Caco-2 (cell line): ENCODE measurements at regions of chr10 and their contacts with region 1.

Region 1: DNA sequence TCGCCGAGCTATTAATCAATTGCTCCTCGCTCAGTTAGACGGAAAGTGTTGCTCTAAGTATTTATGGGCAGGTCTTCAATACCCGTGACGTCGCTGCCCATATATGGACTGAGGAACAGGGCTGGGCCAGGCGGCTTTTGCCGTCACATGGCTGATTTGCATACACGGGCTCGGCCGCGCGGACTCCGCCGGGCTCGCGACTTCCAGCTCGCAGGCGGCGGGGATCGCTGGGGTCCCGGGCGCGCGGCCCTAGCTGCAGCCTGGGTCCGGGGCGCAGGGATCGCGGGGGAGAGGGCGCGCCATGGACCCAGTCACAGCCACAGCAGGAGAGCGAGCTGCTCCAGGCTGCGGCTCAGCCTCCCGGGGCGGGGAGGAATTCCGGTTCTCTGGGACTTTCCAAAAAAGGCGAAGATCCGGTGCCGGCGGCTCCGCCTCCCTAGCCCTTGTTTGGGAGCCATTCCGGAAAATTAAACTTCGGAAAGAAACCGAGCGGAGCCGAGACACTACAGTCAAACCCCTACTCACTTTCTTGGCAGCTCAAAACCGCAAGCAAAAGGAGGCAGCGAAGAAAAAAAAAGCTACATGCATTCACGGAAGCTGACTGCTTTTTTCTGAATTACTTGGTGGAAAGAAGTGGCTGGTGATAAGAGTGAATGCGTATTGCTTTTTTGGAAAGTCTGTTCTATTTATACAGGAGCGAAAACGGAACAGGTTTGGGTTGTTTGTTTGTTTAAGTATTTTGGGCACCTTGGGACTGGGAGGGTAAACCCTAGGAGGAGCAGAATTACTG is at the start of gene EGR2:
- DNase-seq: peak; percentile 96 to 97
- H3K4me3 ChIP-seq: peak within 1 kb of the TSS; percentile 55
- H3K4me3 Mint-ChIP-seq: peak within 1 kb of the TSS; percentile 87
- H3K27ac Mint-ChIP-seq: peak within 1 kb of the TSS; percentile 74
- H3K4me1 ChIP-seq: peaks cover 17% of the 10 kb centered on the region
- H3K4me1 Mint-ChIP-seq: peaks cover 20% of the 10 kb centered on the region
- H3K27me3 ChIP-seq: peaks cover 16% of the 10 kb centered on the region
- H3K27me3 Mint-ChIP-seq: peaks cover 40% of the 10 kb centered on the region
- CTCF ChIP-seq: no peak
- total RNA-seq, gene EGR2: 0.30 and 0.61 TPM in 2 replicates

Region 2: DNA sequence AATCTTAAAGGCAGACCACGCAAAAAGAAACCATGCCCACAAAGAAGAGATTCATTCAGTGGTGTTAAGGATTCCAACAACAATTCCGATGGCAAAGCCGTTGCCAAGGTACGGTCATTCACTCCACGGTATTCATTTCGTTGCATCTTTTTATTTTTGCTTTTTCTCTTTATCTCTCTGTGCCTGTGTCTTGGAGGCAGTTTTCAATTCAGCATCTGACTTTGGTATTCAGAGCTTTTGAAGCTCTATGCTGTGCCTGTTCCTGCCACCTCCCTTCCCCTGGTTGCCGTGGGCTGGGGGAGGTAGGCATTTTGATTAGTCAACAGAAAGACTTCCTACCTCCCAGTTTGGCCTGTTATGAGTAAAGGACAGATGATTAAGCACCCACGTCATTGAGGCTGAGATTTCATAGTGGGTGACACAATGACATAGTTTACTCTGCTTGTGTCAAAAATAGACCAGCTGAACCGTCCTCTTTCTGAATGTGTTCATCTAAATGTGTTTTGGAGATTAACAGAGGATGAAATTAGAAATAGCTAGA is 765.6 kb before region 1 on chr10:
- CTCF ChIA-PET with region 1: no interaction called
- POLR2A ChIA-PET with region 1: no interaction called
- intact Hi-C with region 1: loop called (anchors 10 kb)
- DNase-seq: peak in 1 of 2 experiments; percentile 57
- H3K4me3 ChIP-seq: peak overlapping the region; percentile 36
- H3K4me3 Mint-ChIP-seq: peak overlapping the region; percentile 93
- H3K27ac Mint-ChIP-seq: peak overlapping the region; percentile 79
- H3K4me1 ChIP-seq: peaks cover 74% of the 10 kb centered on the region
- H3K4me1 Mint-ChIP-seq: peaks cover 82% of the 10 kb centered on the region
- H3K27me3 ChIP-seq: no peaks in the 10 kb centered on the region
- H3K27me3 Mint-ChIP-seq: no peaks in the 10 kb centered on the region
- CTCF ChIP-seq: no peak

Region 3: DNA sequence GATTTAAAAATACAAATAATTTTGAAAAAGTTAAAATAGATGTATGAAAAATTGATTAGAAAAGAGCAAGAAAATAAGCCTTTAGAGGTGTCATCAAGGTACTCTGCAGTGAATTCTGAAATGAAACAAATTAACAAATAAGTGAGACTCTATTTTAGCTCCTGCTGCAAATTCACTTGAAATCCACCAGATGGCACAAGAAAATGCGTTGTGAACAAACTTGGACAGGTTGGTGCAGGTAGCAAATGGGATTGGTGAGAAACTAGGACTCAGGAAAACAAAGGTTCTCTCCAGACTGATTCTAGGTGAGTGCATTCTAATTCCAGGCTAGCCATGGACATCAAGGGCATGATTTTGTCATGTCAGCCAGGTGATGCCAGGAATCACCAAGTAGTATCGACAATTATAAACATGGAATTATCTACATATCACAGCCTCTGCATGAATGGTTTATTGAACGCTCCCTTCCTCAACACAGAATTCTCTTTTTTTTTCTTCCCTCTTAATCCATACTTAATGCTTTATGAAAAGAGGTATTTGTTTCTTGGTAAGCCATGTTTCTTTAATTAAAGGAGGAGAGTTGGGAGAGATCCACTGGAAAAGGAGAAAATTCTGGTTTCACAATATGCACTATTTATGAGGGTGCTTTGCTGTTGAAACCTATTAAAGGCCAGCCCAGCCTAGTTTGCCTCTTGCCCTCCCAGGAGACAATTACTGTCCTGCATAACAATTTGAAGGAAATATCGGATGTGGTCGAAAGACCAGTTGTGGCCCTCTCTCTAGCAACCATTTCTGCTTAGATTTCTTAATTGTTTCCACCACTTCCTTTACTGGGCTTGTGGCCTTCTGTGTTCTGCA is 324.3 kb before region 1 on chr10:
- CTCF ChIA-PET with region 1: interaction called, 12 read pairs
- POLR2A ChIA-PET with region 1: no interaction called
- intact Hi-C with region 1: no loop called
- DNase-seq: peak in 1 of 2 experiments; percentile 36
- H3K4me3 ChIP-seq: no peak overlapping the region
- H3K4me3 Mint-ChIP-seq: no peak overlapping the region
- H3K27ac Mint-ChIP-seq: no peak overlapping the region
- H3K4me1 ChIP-seq: no peaks in the 10 kb centered on the region
- H3K4me1 Mint-ChIP-seq: no peaks in the 10 kb centered on the region
- H3K27me3 ChIP-seq: 0 out of 2 replicates have a peak, but pooled peaks cover 1% of the 10 kb centered on the region
- H3K27me3 Mint-ChIP-seq: peaks cover 19% of the 10 kb centered on the region
- CTCF ChIP-seq: peak; percentile 79 to 83

Region 4: DNA sequence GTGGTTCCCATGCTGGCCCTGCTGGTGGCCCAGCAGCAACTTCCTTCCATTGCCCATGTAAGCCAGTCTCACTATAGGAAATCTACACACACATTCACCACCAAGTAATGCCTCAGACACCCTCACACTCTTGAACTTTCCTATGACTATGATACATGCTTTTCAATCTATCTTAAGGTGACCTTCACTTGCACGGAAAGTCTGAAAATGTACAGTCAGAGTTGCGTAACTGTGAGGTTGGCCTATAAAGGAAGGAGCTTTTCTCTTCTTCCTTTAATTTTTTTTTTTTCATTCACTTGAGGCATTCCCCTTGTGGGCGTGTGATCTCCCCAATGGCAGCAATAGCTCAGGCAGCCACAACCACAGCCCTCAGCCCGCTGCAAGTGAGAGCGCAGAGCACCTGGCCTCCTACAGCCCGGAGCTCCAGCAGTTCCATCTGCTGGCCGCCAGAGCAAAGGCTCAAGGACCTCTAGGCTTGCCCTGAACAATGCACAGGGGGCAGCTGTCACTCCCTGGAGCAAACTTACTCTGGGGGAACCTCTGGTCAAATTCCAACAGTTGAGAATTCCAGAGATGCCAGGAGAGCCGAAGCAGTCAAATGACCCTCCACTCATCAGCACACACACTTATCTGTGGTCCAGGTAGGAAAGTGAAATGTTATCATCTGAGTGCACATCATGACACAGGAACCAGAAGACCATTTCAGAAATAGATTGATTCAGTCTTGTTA is 135.2 kb before region 1 on chr10:
- CTCF ChIA-PET with region 1: interaction called, 6 read pairs
- POLR2A ChIA-PET with region 1: no interaction called
- intact Hi-C with region 1: loop called (anchors 1 kb)
- DNase-seq: peak; percentile 80 to 91
- H3K4me3 ChIP-seq: no peak overlapping the region
- H3K4me3 Mint-ChIP-seq: no peak overlapping the region
- H3K27ac Mint-ChIP-seq: no peak overlapping the region
- H3K4me1 ChIP-seq: peaks cover 13% of the 10 kb centered on the region
- H3K4me1 Mint-ChIP-seq: peaks cover 8% of the 10 kb centered on the region
- H3K27me3 ChIP-seq: no peaks in the 10 kb centered on the region
- H3K27me3 Mint-ChIP-seq: peaks cover 2% of the 10 kb centered on the region
- CTCF ChIP-seq: peak; percentile 32 to 65

Region 5: GRCh38 chr10:62804356-62805230 is 11.9 kb before region 1 on chr10 and contains the start of gene ADO:
- CTCF ChIA-PET with region 1: interaction called, 13 read pairs
- POLR2A ChIA-PET with region 1: interaction called, 26 read pairs
- intact Hi-C with region 1: loop called (anchors 1 kb)
- DNase-seq: peak; percentile 88 to 93
- H3K4me3 ChIP-seq: peak within 1 kb of the TSS; percentile 81
- H3K4me3 Mint-ChIP-seq: peak within 1 kb of the TSS; percentile 90
- H3K27ac Mint-ChIP-seq: peak within 1 kb of the TSS; percentile 96
- H3K4me1 ChIP-seq: peaks cover 22% of the 10 kb centered on the region
- H3K4me1 Mint-ChIP-seq: peaks cover 26% of the 10 kb centered on the region
- H3K27me3 ChIP-seq: no peaks in the 10 kb centered on the region
- H3K27me3 Mint-ChIP-seq: no peaks in the 10 kb centered on the region
- CTCF ChIP-seq: peak in 1 of 2 experiments; percentile 50
- total RNA-seq, gene ADO: 31.3 and 34.1 TPM in 2 replicates

Region 6: GRCh38 chr10:63157845-63158624 is 341.5 kb after region 1 on chr10:
- CTCF ChIA-PET with region 1: interaction called, 8 read pairs
- POLR2A ChIA-PET with region 1: no interaction called
- intact Hi-C with region 1: loop called (anchors 1 kb)
- DNase-seq: peak; percentile 70 to 80
- H3K4me3 ChIP-seq: no peak overlapping the region
- H3K4me3 Mint-ChIP-seq: no peak overlapping the region
- H3K27ac Mint-ChIP-seq: no peak overlapping the region
- H3K4me1 ChIP-seq: no peaks in the 10 kb centered on the region
- H3K4me1 Mint-ChIP-seq: no peaks in the 10 kb centered on the region
- H3K27me3 ChIP-seq: no peaks in the 10 kb centered on the region
- H3K27me3 Mint-ChIP-seq: no peaks in the 10 kb centered on the region
- CTCF ChIP-seq: peak; percentile 91 to 92